ENCODE measurements at regions of chr3 and their contacts with region 1.

Region 1: DNA sequence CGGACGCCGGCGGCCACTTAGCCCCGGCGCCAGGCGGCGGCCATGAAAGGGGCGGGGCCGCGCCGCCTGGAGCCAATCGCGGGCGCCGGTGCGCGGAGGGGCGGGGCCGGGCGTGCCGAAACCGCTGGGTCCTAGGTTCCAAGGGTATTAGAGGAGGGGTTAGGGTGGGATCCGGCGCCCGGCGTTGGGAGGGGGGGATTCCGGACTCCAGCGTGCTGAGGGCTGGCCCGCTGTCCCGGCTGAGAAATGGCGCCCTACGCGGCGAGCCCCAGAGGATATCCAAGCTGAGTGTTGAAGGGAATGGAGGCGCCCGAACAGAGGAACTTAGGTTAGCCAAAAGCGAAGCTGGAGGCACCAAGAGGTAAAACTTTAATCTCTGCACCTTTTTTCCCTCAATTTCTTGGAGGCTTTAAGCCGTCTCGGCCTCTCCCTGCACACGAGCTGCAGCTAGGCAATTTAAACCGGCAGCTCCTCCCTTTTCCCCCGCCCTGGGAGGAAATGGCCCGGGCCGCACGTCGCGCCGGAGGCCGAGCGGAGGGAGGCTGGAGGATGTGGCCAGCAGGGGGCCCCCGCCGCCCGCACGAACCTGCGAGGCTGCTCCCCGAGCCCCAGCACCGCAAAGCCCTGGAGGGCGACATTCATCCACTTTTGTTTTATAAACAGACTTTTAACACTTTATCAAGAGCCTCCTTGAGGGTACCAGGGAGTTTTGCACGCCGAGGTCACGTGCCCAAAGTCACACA is at the start of gene XXYLT1:
- DNase-seq: peak; percentile 91
- ATAC-seq: peak; percentile 84
- H3K4me3 ChIP-seq: peak within 1 kb of the TSS; percentile 76 to 90 (median 84)
- H3K4me3 Mint-ChIP-seq: peak within 1 kb of the TSS; percentile 91
- H3K27ac ChIP-seq: peak within 1 kb of the TSS; percentile 27 to 52
- H3K27ac Mint-ChIP-seq: peak within 1 kb of the TSS; percentile 88
- H3K4me1 ChIP-seq: peaks cover 17 to 18% of the 10 kb centered on the region in 2 donors
- H3K4me1 Mint-ChIP-seq: peaks cover 19% of the 10 kb centered on the region
- H3K27me3 ChIP-seq: no peaks in the 10 kb centered on the region
- H3K27me3 Mint-ChIP-seq: no peaks in the 10 kb centered on the region
- CTCF ChIP-seq: peak; percentile 83
- total RNA-seq, gene XXYLT1: 8.8 and 11.2 TPM in 2 replicates

Region 2: DNA sequence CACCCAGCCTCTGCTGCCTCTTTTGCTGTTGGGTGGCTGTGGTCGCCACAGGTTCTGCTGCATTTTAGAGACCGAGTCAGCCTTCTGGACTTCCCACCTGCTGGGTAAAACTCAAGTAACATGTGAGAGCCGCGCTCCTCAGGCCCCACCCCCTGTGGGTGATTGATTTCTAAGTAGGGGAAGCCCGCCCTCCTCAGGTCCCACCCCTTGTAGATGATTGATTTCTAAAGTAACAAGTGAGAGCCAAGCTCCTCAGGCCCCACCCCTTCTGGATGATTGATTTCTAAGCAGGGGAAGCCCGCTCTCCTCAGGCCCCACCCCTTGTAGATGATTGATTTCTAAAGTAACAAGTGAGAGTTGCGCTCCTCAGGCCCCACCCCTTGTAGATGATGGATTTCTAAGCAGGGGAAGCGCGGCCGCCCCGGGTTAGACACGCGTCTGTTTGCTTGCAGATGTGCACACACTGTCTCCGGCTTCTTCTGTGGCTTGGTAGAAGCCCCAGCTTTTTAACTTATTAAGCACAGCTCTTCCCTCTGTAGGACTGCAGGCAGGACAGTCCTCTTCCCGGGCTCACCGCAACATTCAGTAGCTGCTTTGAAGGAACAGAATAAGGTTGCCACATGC is 502.2 kb before region 1 on chr3:
- CTCF ChIA-PET with region 1: interaction called, 4 read pairs
- POLR2A ChIA-PET with region 1: interaction called, 5 read pairs
- intact Hi-C with region 1: loop called (anchors 1 kb)
- DNase-seq: peak; percentile 97
- ATAC-seq: peak; percentile 97
- H3K4me3 ChIP-seq: peak overlapping the region; percentile 40 to 75 (median 55)
- H3K4me3 Mint-ChIP-seq: peak overlapping the region; percentile 85
- H3K27ac ChIP-seq: peak overlapping the region; percentile 52 to 77
- H3K27ac Mint-ChIP-seq: peak overlapping the region; percentile 83
- H3K4me1 ChIP-seq: peaks cover 19 to 29% of the 10 kb centered on the region in 2 donors
- H3K4me1 Mint-ChIP-seq: peaks cover 29% of the 10 kb centered on the region
- H3K27me3 ChIP-seq: peaks cover 0 to 2% (median 0%) of the 10 kb centered on the region in 4 experiments
- H3K27me3 Mint-ChIP-seq: peaks cover 14% of the 10 kb centered on the region
- CTCF ChIP-seq: no peak

Region 3: DNA sequence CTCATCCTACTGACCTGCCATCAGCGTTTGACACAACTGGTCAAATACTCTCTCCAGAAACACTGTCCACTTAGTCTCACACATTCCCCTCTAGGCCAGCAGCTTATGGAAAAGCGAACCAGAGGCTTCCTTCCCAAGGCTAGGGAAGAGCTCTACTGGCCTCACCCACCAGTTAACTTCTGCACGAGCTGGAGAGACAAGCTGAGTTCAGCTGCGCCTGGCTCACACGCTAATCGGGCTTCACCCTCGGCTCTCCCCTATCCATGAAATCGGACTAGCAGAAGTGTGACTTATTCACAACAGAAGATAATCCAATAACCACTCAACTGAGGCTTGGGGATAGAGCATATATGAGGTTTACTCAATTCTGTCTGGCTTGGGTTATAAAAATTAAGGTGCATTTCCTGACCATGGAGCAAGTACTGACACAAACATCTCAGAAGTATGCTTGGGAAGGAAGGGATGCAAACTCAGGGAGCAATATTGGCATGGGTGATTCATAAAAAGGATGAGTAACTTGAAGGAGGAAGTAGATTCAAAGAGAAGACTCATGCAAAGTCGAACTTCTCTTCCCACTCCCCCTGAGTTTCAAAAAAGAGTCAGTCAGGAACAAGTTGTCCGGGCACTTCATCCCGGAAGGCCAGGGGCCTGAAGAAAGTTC is 73.4 kb before region 1 on chr3:
- CTCF ChIA-PET with region 1: no interaction called
- POLR2A ChIA-PET with region 1: no interaction called
- intact Hi-C with region 1: no loop called
- DNase-seq: no peak
- ATAC-seq: no peak
- H3K4me3 ChIP-seq: no peak overlapping the region
- H3K4me3 Mint-ChIP-seq: no peak overlapping the region
- H3K27ac ChIP-seq: no peak overlapping the region
- H3K27ac Mint-ChIP-seq: no peak overlapping the region
- H3K4me1 ChIP-seq: peaks cover 5 to 10% of the 10 kb centered on the region in 2 donors
- H3K4me1 Mint-ChIP-seq: peaks cover 17% of the 10 kb centered on the region
- H3K27me3 ChIP-seq: no peaks in the 10 kb centered on the region
- H3K27me3 Mint-ChIP-seq: no peaks in the 10 kb centered on the region
- CTCF ChIP-seq: no peak

Region 4: DNA sequence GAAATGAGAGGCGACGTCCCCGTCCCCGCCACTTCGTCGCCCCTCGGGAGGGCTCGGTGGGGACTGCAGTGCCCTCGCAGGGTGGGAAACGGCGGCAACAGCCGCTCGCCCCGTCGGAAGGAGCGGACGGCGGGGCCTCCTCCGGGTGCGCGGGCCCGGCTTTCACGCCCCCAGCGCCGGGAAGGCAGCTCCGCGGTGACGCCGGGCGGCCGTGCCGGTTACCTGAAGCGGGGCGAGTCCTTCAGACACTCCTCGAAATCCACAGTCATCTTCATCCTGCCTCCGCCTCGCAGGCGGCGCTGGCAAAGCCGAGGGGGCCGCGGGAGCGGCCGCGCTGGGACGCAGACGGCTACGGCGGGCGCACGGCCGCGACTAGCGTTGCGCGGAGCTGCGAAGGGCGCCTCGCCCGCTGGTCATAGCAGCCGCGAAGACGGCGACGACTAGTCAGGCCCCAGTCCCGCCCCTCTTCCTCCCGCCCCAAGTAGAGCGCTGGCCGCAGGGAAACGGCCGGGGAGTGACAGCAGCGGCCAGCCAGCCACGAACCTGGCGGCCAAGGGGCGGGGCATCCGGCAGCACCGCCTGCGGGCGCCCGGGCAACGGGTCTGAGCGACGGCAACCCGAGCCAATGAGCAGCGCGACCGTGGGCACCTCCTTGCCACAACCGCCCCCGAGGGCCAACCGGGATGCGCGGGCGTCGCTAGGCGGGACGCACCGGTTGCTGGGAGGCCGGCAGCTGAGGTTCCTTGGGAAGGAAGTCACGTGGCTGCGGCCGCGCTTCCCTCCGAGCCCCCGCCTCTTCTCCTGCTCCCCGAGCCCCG is 171.5 kb after region 1 on chr3 and contains the start of gene ACAP2:
- CTCF ChIA-PET with region 1: interaction called, 10 read pairs
- POLR2A ChIA-PET with region 1: interaction called, 8 read pairs
- intact Hi-C with region 1: loop called (anchors 1 kb)
- DNase-seq: peak; percentile 99
- ATAC-seq: peak; percentile 87
- H3K4me3 ChIP-seq: peak within 1 kb of the TSS; percentile 69 to 92 (median 84)
- H3K4me3 Mint-ChIP-seq: peak within 1 kb of the TSS; percentile 94
- H3K27ac ChIP-seq: peak within 1 kb of the TSS; percentile 83 to 88
- H3K27ac Mint-ChIP-seq: peak within 1 kb of the TSS; percentile 97
- H3K4me1 ChIP-seq: peaks cover 29 to 33% of the 10 kb centered on the region in 2 donors
- H3K4me1 Mint-ChIP-seq: peaks cover 40% of the 10 kb centered on the region
- H3K27me3 ChIP-seq: no peaks in the 10 kb centered on the region
- H3K27me3 Mint-ChIP-seq: no peaks in the 10 kb centered on the region
- CTCF ChIP-seq: no peak
- total RNA-seq, gene ACAP2: 108 and 113 TPM in 2 replicates

Region 5: DNA sequence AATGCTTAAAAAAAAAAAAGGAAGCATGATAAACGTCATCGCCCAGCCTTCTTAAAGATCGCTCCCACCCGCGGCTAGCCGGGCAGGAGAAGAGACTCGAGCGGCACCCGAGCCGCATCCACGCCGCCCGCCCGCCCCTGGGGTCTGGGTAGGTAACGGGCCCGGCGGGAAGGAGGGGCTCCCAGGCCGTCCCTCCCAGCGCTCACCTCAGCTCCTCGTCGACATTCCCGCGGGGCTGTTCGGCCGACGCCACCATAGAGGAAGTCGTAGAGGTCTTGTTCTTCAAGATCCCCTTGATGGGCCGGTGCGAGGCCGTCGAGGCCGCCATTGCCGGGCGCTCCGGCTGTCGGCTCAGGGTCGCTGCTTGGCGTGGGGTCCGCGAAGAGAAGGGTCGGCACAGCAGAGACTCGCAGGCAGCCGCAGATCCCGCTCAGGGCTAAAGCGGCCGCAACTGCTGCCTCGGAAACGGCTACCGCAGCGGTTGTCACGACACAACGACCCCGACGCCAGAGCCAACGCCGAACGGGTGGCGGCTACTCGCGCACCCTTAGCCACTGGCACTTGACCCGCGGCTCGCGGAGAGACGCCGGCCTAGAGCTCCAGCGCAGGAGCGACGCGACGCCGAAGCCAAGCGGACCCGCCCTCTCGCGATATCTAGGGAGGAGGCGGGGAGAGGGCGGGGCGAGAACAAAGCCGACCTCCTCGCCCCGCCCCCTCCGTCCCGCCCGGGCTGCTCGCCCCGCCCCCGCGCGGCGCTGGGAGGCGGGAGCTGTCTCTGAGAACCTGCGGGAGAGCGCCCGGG is 271.6 kb after region 1 on chr3 and contains the start of gene PPP1R2:
- CTCF ChIA-PET with region 1: interaction called, 30 read pairs
- POLR2A ChIA-PET with region 1: interaction called, 4 read pairs
- intact Hi-C with region 1: loop called (anchors 1 kb)
- DNase-seq: peak; percentile 95
- ATAC-seq: peak; percentile 90
- H3K4me3 ChIP-seq: peak within 1 kb of the TSS; percentile 75 to 95 (median 93)
- H3K4me3 Mint-ChIP-seq: peak within 1 kb of the TSS; percentile 97
- H3K27ac ChIP-seq: peak within 1 kb of the TSS; percentile 96 to 98
- H3K27ac Mint-ChIP-seq: peak within 1 kb of the TSS; percentile 96
- H3K4me1 ChIP-seq: peaks cover 58 to 65% of the 10 kb centered on the region in 2 donors
- H3K4me1 Mint-ChIP-seq: peaks cover 77% of the 10 kb centered on the region
- H3K27me3 ChIP-seq: no peaks in the 10 kb centered on the region
- H3K27me3 Mint-ChIP-seq: no peaks in the 10 kb centered on the region
- CTCF ChIP-seq: no peak
- total RNA-seq, gene PPP1R2: 73.8 and 81.8 TPM in 2 replicates

Region 6: DNA sequence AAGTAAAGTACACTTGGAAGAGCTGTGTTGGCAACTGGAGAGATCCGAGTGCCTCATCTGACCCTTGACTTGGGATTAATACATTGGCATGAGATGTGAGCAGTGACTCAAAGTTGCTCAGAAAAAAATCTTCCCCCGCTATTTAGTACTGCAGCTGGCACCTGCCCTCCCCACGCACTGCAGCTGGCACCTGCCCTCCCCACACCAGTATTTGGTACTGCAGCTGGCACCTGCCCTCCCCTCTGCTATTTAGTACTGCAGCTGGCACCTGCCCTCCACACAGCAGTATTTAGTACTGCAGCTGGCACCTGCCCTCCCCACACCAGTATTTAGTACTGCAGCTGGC is 445.6 kb after region 1 on chr3:
- CTCF ChIA-PET with region 1: no interaction called
- POLR2A ChIA-PET with region 1: no interaction called
- intact Hi-C with region 1: no loop called
- DNase-seq: peak; percentile 38
- ATAC-seq: no peak
- H3K4me3 ChIP-seq: no peak overlapping the region
- H3K4me3 Mint-ChIP-seq: no peak overlapping the region
- H3K27ac ChIP-seq: no peak overlapping the region
- H3K27ac Mint-ChIP-seq: no peak overlapping the region
- H3K4me1 ChIP-seq: peaks cover 0 to 3% of the 10 kb centered on the region in 2 donors
- H3K4me1 Mint-ChIP-seq: peaks cover 6% of the 10 kb centered on the region
- H3K27me3 ChIP-seq: no peaks in the 10 kb centered on the region
- H3K27me3 Mint-ChIP-seq: peaks cover 10% of the 10 kb centered on the region
- CTCF ChIP-seq: no peak

Measured in B cell (primary cell).